Spleen (tissue), 13 donors: ENCODE measurements at regions of chr14 and their contacts with region 1.

Region 1: DNA sequence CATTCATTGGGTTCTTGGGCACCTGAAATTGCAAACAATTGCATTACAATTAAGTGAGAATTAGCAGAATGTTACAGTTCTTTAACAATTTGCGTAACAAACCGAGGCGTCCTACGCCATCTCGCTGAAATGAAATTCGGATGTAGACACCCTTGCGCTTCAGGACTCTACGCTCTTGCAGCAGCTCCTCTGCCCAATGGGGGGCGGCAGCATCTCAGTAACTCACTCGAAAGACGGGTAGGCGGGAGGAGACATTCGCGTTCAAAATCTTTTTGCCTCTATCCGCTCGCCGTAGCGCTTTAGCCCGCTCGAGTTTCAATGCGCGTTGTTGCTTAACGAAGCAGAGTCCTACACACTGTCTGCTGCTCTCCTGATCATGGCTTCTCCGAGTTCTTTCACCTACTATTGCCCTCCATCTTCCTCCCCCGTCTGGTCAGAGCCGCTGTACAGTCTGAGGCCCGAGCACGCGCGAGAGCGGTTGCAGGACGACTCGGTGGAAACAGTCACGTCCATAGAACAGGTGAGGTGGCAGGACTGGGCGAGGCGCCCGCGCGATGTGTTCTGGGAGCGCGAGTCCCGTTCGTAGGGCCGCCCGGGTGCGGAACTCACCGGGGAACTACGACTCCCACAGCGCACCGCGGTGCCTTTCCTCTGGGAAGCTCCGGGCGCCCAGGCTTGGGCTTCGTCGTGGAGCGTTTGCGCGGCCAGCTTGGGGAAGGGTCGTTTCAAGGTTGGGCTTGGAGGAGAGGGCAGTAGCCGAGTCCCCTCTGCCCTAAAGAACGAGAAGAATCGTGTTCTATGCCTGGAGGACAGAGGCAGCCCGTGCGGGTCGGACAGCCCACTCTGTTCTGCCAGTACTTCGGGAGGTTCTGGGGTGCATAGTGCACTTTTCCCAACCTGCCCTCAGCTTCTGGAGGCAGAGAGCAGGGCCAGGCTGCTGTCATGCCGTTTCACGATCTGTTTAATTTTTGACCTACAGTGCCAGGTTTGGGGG is at the start of gene FNTB:
- DNase-seq: peak; percentile 99
- H3K4me3 ChIP-seq: peak within 1 kb of the TSS; percentile 54 to 94 (median 78)
- H3K27ac ChIP-seq: peak within 1 kb of the TSS; percentile 66 to 92 (median 88)
- H3K4me1 ChIP-seq: peaks cover 7 to 61% (median 46%) of the 10 kb centered on the region in 6 donors
- H3K27me3 ChIP-seq: no peaks in the 10 kb centered on the region
- CTCF ChIP-seq: peak; percentile 69 to 96 (median 89)
- POLR2A ChIP-seq: no peak
- total RNA-seq, gene FNTB: 9.5 to 17.0 (median 11.9) TPM

Region 2: DNA sequence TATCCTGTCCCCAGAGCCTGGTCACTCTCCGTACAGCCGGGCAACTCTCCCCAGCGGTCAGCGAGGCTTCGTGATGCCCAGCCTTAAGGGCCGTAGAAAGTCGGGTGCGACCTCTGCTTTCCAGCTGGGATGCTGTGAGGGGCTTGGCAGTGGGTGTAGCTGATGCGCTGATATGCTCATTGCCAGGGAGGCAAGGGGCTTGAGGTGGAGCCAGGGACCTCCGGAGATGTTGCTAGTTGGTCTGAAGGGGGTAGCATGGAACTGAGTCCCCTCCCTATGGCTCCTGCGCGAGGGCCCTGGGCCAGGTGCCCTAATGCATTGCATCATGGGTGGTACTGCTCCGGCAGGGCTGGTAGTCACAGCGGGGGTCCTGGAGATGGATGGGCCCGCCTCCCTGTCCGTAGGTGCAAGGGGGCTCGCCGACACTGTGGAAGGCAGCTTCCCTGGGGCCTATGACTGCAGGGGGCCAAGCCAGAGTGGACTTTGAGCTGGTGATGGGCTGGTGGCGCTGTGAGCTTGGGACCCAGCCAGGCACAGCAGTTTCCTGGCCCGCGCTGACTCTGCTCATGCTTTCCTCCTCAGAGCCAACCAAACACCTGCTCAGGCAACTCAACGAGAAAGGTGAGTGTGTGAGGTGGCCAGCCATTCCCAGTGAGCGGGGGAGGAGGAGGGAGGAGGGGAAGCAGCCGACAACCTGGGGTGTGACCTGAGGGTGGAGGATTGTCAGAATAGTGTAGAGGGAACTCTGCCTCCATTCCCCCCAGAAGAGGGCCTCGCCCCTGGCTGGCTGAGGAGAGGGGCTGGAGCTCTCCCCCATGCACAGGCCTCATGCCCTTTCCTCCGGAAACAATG is 250.4 kb before region 1 on chr14:
- intact Hi-C with region 1: no loop called
- DNase-seq: peak; percentile 64
- H3K4me3 ChIP-seq: no peak overlapping the region
- H3K27ac ChIP-seq: peak overlapping the region in 2 of 8 donors; percentile 26 to 33
- H3K4me1 ChIP-seq: peaks cover 7 to 22% (median 11%) of the 10 kb centered on the region in 6 donors
- H3K27me3 ChIP-seq: no peaks in the 10 kb centered on the region
- CTCF ChIP-seq: no peak
- POLR2A ChIP-seq: no peak

Region 3: DNA sequence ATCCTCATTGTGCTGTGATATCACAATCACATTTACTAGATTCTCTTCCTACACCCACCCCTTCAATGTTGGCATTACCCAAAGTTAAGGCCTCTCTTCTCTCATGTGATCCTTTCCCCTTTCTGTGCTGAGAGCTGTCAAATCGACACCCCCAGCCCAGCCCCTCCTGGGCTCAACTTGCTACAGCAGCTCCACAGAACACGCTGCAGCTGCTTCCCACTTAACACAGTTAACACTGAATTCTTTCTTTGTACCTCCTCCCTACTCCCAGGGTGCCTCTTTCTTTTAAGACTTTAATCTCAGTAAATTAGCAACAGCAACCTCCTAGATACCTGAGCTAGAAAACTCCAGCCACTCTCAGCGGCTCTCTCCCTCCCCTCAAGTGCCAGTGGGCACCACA is 125.0 kb before region 1 on chr14:
- intact Hi-C with region 1: no loop called
- DNase-seq: no peak
- H3K4me3 ChIP-seq: no peak overlapping the region
- H3K27ac ChIP-seq: no peak overlapping the region
- H3K4me1 ChIP-seq: no peaks in the 10 kb centered on the region
- H3K27me3 ChIP-seq: peaks cover 0 to 11% (median 0%) of the 10 kb centered on the region in 7 donors
- CTCF ChIP-seq: no peak
- POLR2A ChIP-seq: no peak

Region 4: GRCh38 chr14:65095619-65096205 is 108.8 kb after region 1 on chr14:
- intact Hi-C with region 1: loop called (anchors 10 kb)
- DNase-seq: no peak
- H3K4me3 ChIP-seq: no peak overlapping the region
- H3K27ac ChIP-seq: peak overlapping the region in 5 of 8 donors; percentile 9 to 99 (median 27)
- H3K4me1 ChIP-seq: peaks cover 42 to 89% (median 77%) of the 10 kb centered on the region in 6 donors
- H3K27me3 ChIP-seq: no peaks in the 10 kb centered on the region
- CTCF ChIP-seq: no peak
- POLR2A ChIP-seq: no peak